Activated B cell treated with CpG ODN at 0.5 μM for 24 hours (primary cell): ENCODE measurements at regions of chr1 and their contacts with region 1.

Region 1: DNA sequence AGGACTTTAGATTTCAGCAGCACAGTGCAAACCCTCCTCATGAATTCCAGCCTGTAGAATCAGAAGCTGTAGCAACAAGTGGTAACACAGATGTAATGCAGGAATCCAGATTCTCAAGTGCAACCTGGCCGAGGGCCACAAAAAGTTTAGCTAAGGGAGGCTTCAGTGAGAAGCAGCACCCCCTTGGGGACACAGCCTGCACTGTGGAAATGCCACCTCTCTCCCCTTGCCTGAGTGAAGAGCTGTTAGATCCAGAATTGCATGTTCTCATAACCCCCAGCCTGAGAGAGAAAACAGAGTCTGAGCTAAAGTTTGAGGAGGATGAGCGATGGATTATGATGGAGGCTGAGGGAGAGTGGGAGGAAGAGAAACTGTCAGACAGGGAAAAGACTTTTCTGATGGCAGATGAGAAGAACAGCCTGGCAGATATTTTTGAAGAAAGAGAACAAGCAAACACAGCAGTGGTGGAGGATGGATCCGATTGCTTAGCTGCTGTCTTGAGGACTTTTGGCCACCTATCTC is 80.5 kb upstream of the BMP8A start:
- DNase-seq: no peak
- ATAC-seq: no peak
- H3K4me3 Mint-ChIP-seq: peak overlapping the region; percentile 4
- H3K27ac Mint-ChIP-seq: no peak overlapping the region
- H3K4me1 Mint-ChIP-seq: peaks cover 26% of the 10 kb centered on the region
- H3K27me3 Mint-ChIP-seq: no peaks in the 10 kb centered on the region
- CTCF ChIP-seq: no peak

Region 2: GRCh38 chr1:39238476-39238875 is 172.5 kb before region 1 on chr1:
- CTCF ChIA-PET with region 1: no interaction called
- POLR2A ChIA-PET with region 1: no interaction called
- intact Hi-C with region 1: no loop called
- DNase-seq: no peak
- ATAC-seq: no peak
- H3K4me3 Mint-ChIP-seq: no peak overlapping the region
- H3K27ac Mint-ChIP-seq: peak overlapping the region; percentile 54
- H3K4me1 Mint-ChIP-seq: peaks cover 19% of the 10 kb centered on the region
- H3K27me3 Mint-ChIP-seq: no peaks in the 10 kb centered on the region
- CTCF ChIP-seq: no peak

Region 3: GRCh38 chr1:39398278-39399021 is 12.5 kb before region 1 on chr1:
- CTCF ChIA-PET with region 1: interaction called, 11 read pairs
- POLR2A ChIA-PET with region 1: interaction called, 7 read pairs
- intact Hi-C with region 1: no loop called
- DNase-seq: no peak
- ATAC-seq: peak; percentile 75
- H3K4me3 Mint-ChIP-seq: peak overlapping the region; percentile 24
- H3K27ac Mint-ChIP-seq: peak overlapping the region; percentile 32
- H3K4me1 Mint-ChIP-seq: peaks cover 52% of the 10 kb centered on the region
- H3K27me3 Mint-ChIP-seq: no peaks in the 10 kb centered on the region
- CTCF ChIP-seq: no peak

Region 4: GRCh38 chr1:39485046-39485803 is 74.2 kb after region 1 on chr1:
- CTCF ChIA-PET with region 1: no interaction called
- POLR2A ChIA-PET with region 1: interaction called, 12 read pairs
- intact Hi-C with region 1: no loop called
- DNase-seq: no peak
- ATAC-seq: no peak
- H3K4me3 Mint-ChIP-seq: no peak overlapping the region
- H3K27ac Mint-ChIP-seq: no peak overlapping the region
- H3K4me1 Mint-ChIP-seq: no peaks in the 10 kb centered on the region
- H3K27me3 Mint-ChIP-seq: no peaks in the 10 kb centered on the region
- CTCF ChIP-seq: no peak

Region 5: DNA sequence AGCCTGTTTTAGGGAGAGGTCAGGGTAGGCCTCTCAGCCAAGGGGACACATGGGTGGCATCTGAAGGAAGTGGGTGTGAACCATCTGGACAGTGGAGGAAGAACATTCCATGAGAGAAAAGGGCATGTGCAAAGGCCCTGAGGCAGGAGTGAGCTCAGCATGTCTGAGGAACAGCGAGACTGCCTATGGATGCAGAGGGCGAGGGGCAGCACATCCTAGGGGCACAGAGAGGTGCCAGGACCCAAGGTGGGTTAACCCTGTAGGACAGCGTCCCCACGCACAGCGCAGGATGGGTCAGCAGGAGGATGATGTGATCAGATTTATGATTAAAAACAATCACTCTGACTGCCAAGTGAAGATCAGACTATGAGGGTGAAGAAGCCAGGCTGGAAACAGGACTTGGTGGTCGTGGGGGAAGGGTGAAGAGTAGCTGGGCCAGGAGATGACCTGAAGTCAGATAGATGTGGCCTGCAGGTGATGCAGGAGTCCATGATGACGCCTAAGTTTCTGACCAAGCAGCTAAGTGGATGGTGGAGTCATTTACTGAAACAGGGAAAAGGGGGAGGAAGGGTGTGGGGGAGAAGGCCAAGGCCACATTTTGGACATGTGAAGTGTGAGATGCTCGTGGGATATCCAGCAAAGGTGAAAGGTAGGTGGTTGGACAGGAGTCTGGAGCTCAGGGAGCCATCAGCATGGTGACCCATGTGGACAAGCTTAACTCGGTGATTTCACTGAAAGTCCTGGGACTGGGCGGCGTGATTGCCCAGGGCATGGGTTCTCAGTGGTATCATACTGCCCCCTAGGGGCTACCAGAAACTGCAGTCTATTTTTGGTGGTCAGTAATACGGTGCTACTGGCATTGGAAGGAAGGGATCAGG is 127.9 kb after region 1 on chr1:
- CTCF ChIA-PET with region 1: interaction called, 3 read pairs
- POLR2A ChIA-PET with region 1: no interaction called
- intact Hi-C with region 1: loop called (anchors 1 kb)
- DNase-seq: peak; percentile 38
- ATAC-seq: peak; percentile 80
- H3K4me3 Mint-ChIP-seq: no peak overlapping the region
- H3K27ac Mint-ChIP-seq: no peak overlapping the region
- H3K4me1 Mint-ChIP-seq: peaks cover 17% of the 10 kb centered on the region
- H3K27me3 Mint-ChIP-seq: no peaks in the 10 kb centered on the region
- CTCF ChIP-seq: no peak

Region 6: DNA sequence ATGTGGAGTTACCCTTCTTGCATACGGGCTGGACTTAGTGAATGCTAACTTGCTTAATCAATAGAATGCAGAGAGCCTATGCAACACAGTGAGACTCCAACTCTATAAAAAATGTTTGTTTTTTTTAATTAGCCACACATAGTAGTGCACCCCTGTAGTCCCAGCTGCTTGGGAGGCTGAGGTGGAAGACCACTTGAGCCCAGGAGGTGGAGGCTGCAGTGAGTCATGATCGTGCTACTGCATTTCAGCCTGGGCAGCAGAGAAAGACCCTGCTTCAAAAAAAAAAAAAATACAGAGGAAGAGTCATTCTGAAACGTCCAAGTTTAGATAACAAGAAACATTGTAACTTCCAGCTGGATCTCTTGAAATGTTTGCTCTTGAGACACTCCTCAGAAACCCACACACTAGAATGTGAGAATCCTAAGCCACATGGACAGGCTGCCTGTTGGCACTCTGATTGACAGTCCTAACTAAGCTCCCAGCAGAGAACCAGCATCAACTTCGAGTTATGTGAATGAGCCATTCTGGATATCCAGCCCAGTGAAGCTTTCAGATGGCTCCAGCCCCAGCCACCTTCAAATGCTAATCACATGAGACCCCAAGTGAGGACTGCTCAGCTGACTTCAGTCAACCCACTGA is 609.6 kb after region 1 on chr1:
- CTCF ChIA-PET with region 1: no interaction called
- POLR2A ChIA-PET with region 1: no interaction called
- intact Hi-C with region 1: no loop called
- DNase-seq: no peak
- ATAC-seq: no peak
- H3K4me3 Mint-ChIP-seq: no peak overlapping the region
- H3K27ac Mint-ChIP-seq: no peak overlapping the region
- H3K4me1 Mint-ChIP-seq: peaks cover 22% of the 10 kb centered on the region
- H3K27me3 Mint-ChIP-seq: no peaks in the 10 kb centered on the region
- CTCF ChIP-seq: no peak